ENCODE measurements at regions of chr2 and their contacts with region 1.

Region 1: DNA sequence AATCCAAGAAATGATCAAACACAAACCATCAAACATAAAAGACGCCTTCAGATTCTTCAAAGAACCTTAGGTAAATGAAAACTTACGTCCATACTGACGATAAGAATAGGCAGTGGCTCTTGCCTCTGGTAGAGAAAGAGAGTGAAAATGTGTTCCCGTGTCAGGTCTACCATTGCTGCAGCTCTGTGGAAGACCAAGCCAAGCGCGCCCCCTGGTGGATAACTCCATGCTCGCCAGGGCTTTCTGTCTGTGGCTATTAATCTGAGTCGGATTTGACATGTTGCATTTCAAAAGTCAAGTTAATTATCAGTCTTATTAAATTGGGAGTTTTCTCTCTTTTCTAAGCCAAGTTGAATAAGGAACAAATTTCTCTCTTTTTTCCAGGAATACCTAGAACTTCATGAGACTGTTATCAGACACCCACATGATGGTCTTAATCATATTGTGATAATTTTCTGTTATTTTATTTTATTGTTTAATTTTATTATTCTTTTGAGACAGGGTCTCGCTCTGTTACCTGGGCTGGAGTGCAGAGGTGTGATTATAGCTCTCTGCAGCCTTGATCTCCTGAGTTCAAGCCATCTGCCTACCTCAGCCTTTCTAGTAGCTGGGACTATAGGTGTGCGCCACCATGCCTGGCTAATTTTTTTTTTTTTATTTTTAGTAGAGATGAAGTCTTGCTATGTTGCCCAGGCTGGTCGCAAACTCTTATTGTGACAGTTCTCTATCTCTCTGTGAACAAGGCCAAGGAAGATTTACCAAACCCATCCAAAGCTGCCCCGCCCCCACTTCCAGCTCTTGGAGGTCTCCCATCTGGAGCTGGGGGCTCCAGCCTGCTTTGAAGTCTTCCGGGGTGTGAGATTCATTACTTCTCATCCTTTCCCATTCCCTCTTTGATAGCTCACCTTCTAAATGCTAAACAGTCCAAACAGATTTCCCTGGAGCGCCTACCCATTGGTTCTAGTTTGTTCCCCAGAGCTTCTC is 15.8 kb upstream of the ZAP70 start:
- DNase-seq: peak; percentile 80
- ATAC-seq: peak; percentile 86
- H3K4me3 Mint-ChIP-seq: peak overlapping the region; percentile 4
- H3K27ac Mint-ChIP-seq: peak overlapping the region; percentile 30
- H3K4me1 Mint-ChIP-seq: peaks cover 6% of the 10 kb centered on the region
- H3K27me3 Mint-ChIP-seq: peaks cover 2% of the 10 kb centered on the region
- CTCF ChIP-seq: peak; percentile 50

Region 2: DNA sequence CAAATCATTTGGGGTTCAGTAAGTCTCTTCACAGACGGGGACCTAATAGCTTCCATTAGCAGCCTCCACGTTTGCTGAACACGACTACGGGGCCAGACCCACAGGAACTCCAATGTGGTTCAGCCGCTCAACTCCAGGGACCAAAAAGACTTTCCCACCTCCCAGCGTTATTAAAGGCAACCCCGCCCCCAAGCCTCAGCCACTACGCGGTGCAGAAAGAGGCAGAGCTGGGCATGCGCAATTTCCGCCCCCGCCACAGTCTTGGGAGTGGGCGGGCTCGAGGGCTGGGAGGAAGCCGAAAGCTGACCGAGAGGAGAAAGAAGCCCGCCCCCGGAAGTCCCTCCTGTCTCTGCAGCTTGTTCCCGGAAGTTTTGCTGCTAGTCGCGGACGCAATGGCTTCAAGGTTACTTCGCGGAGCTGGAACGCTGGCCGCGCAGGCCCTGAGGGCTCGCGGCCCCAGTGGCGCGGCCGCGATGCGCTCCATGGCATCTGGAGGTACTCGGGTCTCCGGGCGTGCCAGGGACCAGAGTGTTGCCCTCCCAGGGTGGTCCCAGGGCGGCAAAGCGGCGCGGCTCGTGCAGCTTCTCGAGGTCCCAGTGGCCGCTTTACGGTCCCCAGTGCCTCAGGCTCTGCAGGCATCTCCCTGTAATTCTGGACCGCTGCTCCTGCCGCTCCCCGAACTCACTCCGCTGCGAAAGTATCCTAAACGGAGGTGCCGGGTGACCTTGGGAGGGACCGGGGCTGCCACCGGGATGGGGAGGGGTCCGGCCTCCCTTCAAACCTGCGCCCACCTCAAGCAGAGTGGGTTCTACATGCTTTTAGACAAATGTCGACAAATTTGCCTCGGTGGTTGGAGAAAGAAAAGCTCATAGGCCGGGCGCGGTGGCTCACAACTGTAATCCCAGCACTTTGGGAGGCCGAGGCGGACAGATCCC is 51.6 kb before region 1 on chr2 and contains the start of gene COX5B:
- CTCF ChIA-PET with region 1: interaction called, 10 read pairs
- POLR2A ChIA-PET with region 1: interaction called, 4 read pairs
- intact Hi-C with region 1: loop called (anchors 2 kb)
- DNase-seq: peak; percentile 94
- ATAC-seq: peak; percentile 98
- H3K4me3 Mint-ChIP-seq: peak within 1 kb of the TSS; percentile 94
- H3K27ac Mint-ChIP-seq: peak within 1 kb of the TSS; percentile 94
- H3K4me1 Mint-ChIP-seq: peaks cover 19% of the 10 kb centered on the region
- H3K27me3 Mint-ChIP-seq: no peaks in the 10 kb centered on the region
- CTCF ChIP-seq: no peak
- total RNA-seq, gene COX5B: 156 and 183 TPM in 2 replicates

Region 3: GRCh38 chr2:97740590-97741182 is 43.1 kb after region 1 on chr2:
- CTCF ChIA-PET with region 1: interaction called, 10 read pairs
- POLR2A ChIA-PET with region 1: no interaction called
- intact Hi-C with region 1: no loop called
- DNase-seq: no peak
- ATAC-seq: peak; percentile 78
- H3K4me3 Mint-ChIP-seq: no peak overlapping the region
- H3K27ac Mint-ChIP-seq: no peak overlapping the region
- H3K4me1 Mint-ChIP-seq: peaks cover 29% of the 10 kb centered on the region
- H3K27me3 Mint-ChIP-seq: no peaks in the 10 kb centered on the region
- CTCF ChIP-seq: peak; percentile 35

Region 4: GRCh38 chr2:97747716-97748115 is 50.2 kb after region 1 on chr2:
- CTCF ChIA-PET with region 1: interaction called, 21 read pairs
- POLR2A ChIA-PET with region 1: no interaction called
- intact Hi-C with region 1: loop called (anchors 1 kb)
- DNase-seq: no peak
- ATAC-seq: no peak
- H3K4me3 Mint-ChIP-seq: no peak overlapping the region
- H3K27ac Mint-ChIP-seq: no peak overlapping the region
- H3K4me1 Mint-ChIP-seq: peaks cover 41% of the 10 kb centered on the region
- H3K27me3 Mint-ChIP-seq: no peaks in the 10 kb centered on the region
- CTCF ChIP-seq: no peak

Region 5: DNA sequence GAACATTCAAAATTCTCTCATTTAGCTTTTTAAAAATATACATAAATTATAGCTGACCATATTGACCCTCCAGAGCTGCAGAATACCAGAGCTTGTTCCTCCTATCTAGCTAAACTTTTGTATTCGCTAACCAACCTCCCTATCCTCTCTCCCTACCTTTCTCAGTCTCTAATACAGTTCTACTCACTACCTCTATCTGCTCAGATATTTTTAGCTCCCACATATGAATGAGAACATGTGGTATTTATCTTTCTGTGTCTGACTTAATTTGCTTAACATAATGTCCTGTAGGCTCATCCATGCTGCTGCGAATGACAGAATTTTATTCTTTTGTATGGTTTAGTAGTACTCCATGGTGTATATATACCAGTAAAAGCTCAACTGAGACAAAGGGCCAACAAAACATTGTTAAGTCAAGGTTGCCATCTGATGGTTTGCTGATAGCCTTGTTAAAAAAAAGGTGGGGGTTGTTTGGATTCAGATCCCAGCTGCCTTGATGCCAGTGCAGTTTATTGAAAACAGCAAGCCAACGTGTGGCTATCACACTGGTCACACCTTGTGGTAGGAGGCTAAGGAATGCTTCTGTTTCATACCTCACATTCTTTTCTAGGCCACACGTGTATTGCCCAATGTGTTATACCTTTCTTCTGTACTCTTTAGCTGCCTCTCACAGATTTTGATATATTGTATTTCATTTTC is 491.0 kb after region 1 on chr2:
- CTCF ChIA-PET with region 1: interaction called, 9 read pairs
- POLR2A ChIA-PET with region 1: no interaction called
- intact Hi-C with region 1: loop called (anchors 1 kb)
- DNase-seq: no peak
- ATAC-seq: no peak
- H3K4me3 Mint-ChIP-seq: no peak overlapping the region
- H3K27ac Mint-ChIP-seq: no peak overlapping the region
- H3K4me1 Mint-ChIP-seq: no peaks in the 10 kb centered on the region
- H3K27me3 Mint-ChIP-seq: peaks cover 2% of the 10 kb centered on the region
- CTCF ChIP-seq: no peak

Region 6: GRCh38 chr2:98385050-98385699 is 687.6 kb after region 1 on chr2:
- CTCF ChIA-PET with region 1: interaction called, 31 read pairs
- POLR2A ChIA-PET with region 1: no interaction called
- intact Hi-C with region 1: loop called (anchors 1 kb)
- DNase-seq: peak; percentile 58
- ATAC-seq: peak; percentile 78
- H3K4me3 Mint-ChIP-seq: no peak overlapping the region
- H3K27ac Mint-ChIP-seq: no peak overlapping the region
- H3K4me1 Mint-ChIP-seq: no peaks in the 10 kb centered on the region
- H3K27me3 Mint-ChIP-seq: peaks cover 10% of the 10 kb centered on the region
- CTCF ChIP-seq: peak; percentile 50